GM12878 (cell line): ENCODE measurements at regions of chr16 and their contacts with region 1.

Region 1: GRCh38 chr16:35152067-35152627 is 1692.7 kb downstream of the TP53TG3F start:
- DNase-seq: no peak
- ATAC-seq: no peak
- H3K4me3 ChIP-seq: no peak overlapping the region
- H3K27ac ChIP-seq: no peak overlapping the region
- H3K4me1 ChIP-seq: no peaks in the 10 kb centered on the region
- H3K27me3 ChIP-seq: no peaks in the 10 kb centered on the region
- CTCF ChIP-seq: no peak
- EP300 ChIP-seq: no peak
- POLR2A ChIP-seq: no peak
- RAD21 ChIP-seq: no peak

Region 2: GRCh38 chr16:35524004-35524403 is 371.9 kb after region 1 on chr16:
- CTCF ChIA-PET with region 1: no interaction called
- POLR2A ChIA-PET with region 1: no interaction called
- RAD21 ChIA-PET with region 1: no interaction called
- SMC1A ChIA-PET with region 1: no interaction called
- in situ Hi-C with region 1: loop called (anchors 5 kb)
- intact Hi-C with region 1: no loop called
- DNase-seq: no peak
- ATAC-seq: no peak
- H3K4me3 ChIP-seq: no peak overlapping the region
- H3K27ac ChIP-seq: no peak overlapping the region
- H3K4me1 ChIP-seq: no peaks in the 10 kb centered on the region
- H3K27me3 ChIP-seq: no peaks in the 10 kb centered on the region
- CTCF ChIP-seq: no peak
- EP300 ChIP-seq: no peak
- POLR2A ChIP-seq: no peak
- RAD21 ChIP-seq: no peak